ENCODE measurements at regions of chr14 and their contacts with region 1.

Region 1: DNA sequence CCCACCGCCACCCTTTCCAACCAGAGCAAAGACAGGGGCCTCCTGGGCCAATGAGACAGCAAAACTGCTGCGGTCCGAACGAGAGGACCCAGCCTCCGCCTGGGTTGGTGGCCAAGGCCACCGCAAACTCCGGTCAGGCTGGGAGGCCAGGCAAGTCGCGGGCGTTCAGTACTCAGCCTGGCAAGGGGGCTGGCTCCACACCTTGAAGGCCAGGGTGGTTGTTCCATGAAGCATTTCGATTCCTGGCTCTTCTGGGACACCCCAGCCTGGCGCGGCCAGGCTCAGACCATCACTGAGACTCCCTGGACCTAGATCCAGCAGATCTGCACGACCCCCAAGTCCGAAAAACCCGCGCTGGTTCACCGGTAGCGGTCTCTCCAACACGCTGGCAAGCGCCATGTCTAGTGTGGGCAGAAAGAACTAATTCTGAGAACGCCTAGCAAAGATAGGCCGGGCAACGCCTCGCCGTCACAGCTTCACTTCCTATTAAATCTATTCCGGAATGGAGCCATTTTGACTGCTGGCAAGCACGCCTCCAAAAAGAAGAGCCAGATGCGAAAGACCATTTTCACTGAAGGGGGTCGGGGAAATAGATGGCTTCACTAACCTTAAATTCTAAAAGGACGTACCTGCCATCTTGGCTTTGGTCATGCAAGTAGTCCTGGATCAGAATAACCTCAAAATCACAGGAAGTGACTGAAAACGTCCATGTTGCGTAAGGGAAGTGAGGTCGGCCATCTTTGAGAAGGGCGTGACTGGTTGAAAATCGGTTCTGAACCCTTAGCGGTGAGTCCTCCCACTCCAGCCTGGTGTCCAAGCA is at the start of gene PSMB5:
- DNase-seq: peak; percentile 94
- H3K4me3 Mint-ChIP-seq: peak within 1 kb of the TSS; percentile 95
- H3K27ac Mint-ChIP-seq: peak within 1 kb of the TSS; percentile 95
- H3K4me1 Mint-ChIP-seq: peaks cover 28% of the 10 kb centered on the region
- H3K27me3 Mint-ChIP-seq: no peaks in the 10 kb centered on the region
- total RNA-seq, gene PSMB5: 116 to 119 TPM

Region 2: GRCh38 chr14:23095196-23096108 is 60.8 kb after region 1 on chr14 and contains the start of gene C14orf119:
- CTCF ChIA-PET with region 1: no interaction called
- POLR2A ChIA-PET with region 1: interaction called, 5 read pairs
- intact Hi-C with region 1: loop called (anchors 1 kb)
- DNase-seq: peak; percentile 100
- H3K4me3 Mint-ChIP-seq: no peak within 1 kb of the TSS
- H3K27ac Mint-ChIP-seq: no peak within 1 kb of the TSS
- H3K4me1 Mint-ChIP-seq: peaks cover 40% of the 10 kb centered on the region
- H3K27me3 Mint-ChIP-seq: no peaks in the 10 kb centered on the region
- total RNA-seq, gene C14orf119: 58.0 to 62.8 TPM

Region 3: DNA sequence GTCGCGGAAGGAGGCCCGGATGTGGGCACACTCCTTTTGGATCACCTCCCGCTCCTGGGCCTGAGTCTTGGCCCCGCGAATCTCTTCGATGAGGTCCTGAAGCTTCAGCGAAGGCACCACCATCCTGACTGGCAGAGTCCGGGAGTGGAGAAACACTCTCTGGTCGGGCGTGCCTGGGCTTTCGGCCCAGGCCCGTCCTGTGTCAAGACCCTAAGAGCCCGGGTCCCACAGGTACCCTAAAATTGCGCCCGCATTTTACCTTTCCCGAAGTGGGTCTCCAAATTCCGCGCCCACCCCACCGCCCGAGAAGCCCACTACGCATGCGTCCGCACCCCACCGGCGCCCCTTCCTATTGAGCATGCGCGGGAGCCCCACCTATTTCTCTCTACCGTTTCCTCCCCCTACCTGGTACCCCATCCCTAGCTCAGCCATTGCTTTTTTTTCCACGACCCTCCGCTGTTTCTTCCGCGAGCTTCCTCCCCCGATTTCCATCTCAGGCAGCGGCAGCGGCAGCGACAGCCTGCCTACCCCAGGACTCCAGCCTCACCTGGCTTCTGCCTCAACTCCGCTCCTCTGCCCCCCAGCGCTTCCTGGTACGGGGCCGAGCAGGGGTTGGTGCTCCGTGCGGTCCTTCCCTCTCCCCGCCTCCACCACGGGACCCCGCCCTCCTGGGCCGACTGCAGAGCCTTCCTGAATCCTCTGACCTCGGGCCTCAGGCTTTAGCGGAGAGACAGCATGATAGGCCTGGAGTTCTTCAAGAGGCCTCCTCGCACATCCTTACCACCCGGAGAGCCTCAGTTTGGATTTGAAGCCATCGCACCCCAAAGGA is 532.7 kb after region 1 on chr14 and contains the start of gene AP1G2:
- CTCF ChIA-PET with region 1: no interaction called
- POLR2A ChIA-PET with region 1: no interaction called
- intact Hi-C with region 1: no loop called
- DNase-seq: peak; percentile 95
- H3K4me3 Mint-ChIP-seq: peak within 1 kb of the TSS; percentile 91
- H3K27ac Mint-ChIP-seq: peak within 1 kb of the TSS; percentile 90
- H3K4me1 Mint-ChIP-seq: peaks cover 34% of the 10 kb centered on the region
- H3K27me3 Mint-ChIP-seq: no peaks in the 10 kb centered on the region
- total RNA-seq, gene AP1G2: 182 to 190 TPM

Region 4: DNA sequence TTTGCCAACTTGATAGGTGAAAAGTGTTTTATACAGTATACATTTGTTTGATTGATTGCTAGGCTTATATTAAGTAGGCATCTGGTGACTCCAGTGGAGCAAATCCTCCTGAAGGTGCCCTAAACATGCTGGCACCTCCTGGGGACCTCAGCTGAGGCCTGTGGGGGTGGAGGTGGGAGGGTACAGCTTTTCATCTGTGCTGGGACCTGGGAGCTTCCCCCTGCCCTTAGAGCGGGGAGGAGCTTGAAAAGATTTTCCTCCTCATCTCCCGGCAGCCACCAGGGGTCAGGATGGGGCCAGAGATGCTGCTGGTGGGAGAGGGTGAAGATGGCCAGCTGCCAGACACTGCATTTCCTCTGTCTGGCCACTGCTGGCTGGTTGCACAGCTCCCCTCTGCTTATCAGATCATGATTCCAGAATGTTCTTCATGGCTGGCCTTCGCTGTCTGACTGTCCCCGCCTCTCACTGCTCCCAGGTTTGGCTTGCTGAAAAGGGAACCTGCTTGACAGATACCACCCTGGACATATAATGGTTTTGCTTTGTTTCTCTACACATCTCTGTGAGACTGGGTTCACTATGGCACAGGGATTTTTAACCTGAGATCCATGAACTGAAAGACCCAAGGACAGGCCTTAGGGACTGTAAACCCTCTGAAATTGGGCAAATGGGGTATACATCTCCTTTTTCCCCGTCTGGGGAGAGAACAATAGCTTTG is 554.3 kb after region 1 on chr14:
- CTCF ChIA-PET with region 1: no interaction called
- POLR2A ChIA-PET with region 1: no interaction called
- intact Hi-C with region 1: no loop called
- DNase-seq: peak; percentile 91
- H3K4me3 Mint-ChIP-seq: no peak overlapping the region
- H3K27ac Mint-ChIP-seq: no peak overlapping the region
- H3K4me1 Mint-ChIP-seq: peaks cover 2% of the 10 kb centered on the region
- H3K27me3 Mint-ChIP-seq: peaks cover 15% of the 10 kb centered on the region

Measured in activated CD4-positive, alpha-beta memory T cell treated with anti-CD3 and anti-CD28 coated beads for 36 hours (primary cell).